AG04449 (cell line): ENCODE measurements at regions of chr10 and their contacts with region 1.

Region 1: GRCh38 chr10:71569775-71570588 is 149.6 kb downstream of the C10orf105 start:
- DNase-seq: no peak
- H3K4me3 ChIP-seq: no peak overlapping the region
- CTCF ChIP-seq: peak; percentile 84

Region 2: GRCh38 chr10:71302874-71303568 is 267.0 kb before region 1 on chr10:
- CTCF ChIA-PET with region 1: interaction called, 14 read pairs
- POLR2A ChIA-PET with region 1: no interaction called
- DNase-seq: peak; percentile 17
- H3K4me3 ChIP-seq: no peak overlapping the region
- CTCF ChIP-seq: peak; percentile 30

Region 3: GRCh38 chr10:71378336-71379117 is 191.5 kb before region 1 on chr10:
- CTCF ChIA-PET with region 1: interaction called, 16 read pairs
- POLR2A ChIA-PET with region 1: no interaction called
- DNase-seq: no peak
- H3K4me3 ChIP-seq: no peak overlapping the region
- CTCF ChIP-seq: no peak

Region 4: DNA sequence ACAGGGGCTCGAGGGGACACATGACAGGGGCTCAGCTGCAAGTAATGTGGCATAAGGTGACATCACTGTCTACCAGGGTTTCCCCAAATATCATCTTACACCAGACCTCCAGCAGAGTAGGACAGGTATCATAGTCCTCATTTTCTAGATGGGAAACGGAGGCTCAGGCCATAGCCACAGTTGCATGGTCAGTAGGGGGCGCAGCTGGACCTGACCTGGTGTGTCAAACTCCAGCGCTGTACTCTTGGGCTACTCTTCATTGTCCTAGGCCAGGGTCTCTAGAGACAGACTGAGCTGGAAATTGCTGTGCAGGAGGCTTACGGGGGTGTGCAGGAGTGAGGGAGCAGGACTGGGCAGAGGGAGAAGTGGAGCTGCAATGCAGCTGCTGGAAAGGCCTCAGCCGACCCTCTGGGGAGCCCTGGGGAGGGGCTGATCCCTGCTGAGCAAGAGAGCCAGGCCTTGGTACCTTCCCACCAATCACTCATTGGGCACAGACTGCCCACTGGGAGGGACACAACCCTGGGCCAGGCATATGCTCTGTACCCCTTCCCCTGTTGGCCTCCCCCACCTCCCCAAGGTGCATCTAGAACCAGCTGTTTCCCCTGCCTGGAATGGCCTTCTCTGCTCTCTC is 83.4 kb before region 1 on chr10:
- CTCF ChIA-PET with region 1: no interaction called
- POLR2A ChIA-PET with region 1: no interaction called
- DNase-seq: no peak
- H3K4me3 ChIP-seq: no peak overlapping the region
- CTCF ChIP-seq: peak; percentile 22

Region 5: GRCh38 chr10:71547876-71548846 is 21.8 kb before region 1 on chr10:
- CTCF ChIA-PET with region 1: interaction called, 55 read pairs
- POLR2A ChIA-PET with region 1: no interaction called
- DNase-seq: no peak
- H3K4me3 ChIP-seq: no peak overlapping the region
- CTCF ChIP-seq: peak; percentile 22

Region 6: DNA sequence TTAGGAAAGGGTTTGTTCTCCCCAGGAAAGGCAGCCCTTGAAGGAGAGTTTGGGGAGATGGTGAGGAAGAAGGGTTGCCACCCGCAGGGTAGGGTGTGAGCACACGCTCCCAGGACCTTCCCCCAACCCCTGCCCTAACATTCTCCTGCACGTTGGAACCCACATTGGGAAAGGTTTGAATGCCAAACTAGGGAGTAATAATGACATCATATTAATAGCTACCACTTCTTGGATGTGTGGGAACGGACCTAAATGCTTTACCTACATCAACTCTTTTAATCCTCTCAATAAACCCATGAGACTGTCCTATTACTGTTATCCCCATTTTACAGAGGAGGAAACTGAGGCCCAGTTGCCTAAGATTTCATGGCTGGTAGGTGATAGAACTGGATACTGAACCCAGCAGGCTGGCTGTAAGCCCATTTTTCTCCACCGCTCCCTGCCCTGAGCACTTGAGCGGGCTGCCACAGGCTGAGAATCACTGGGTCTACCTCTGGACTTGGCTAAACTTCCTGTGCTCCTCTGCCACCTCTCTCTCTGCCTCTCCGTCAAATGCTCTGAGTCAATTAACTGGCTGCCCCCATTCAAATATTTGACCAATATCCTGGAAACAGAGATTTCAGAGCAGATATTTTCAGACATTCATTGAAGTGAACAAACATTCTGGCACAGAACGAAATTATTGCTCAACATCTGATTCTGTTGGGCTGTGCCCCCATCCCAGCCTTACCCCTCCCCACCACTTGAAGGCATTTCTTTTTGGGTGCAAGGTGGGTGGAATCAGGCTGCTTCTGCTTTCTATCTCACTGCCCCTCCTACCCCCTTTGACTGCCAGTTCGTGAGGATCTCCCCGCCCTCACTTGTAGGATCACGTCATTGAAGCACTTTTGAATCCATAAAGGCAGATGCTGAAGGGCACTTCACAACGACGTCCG is 19.9 kb after region 1 on chr10:
- CTCF ChIA-PET with region 1: interaction called, 37 read pairs
- POLR2A ChIA-PET with region 1: no interaction called
- DNase-seq: no peak
- H3K4me3 ChIP-seq: no peak overlapping the region
- CTCF ChIP-seq: no peak

Region 7: DNA sequence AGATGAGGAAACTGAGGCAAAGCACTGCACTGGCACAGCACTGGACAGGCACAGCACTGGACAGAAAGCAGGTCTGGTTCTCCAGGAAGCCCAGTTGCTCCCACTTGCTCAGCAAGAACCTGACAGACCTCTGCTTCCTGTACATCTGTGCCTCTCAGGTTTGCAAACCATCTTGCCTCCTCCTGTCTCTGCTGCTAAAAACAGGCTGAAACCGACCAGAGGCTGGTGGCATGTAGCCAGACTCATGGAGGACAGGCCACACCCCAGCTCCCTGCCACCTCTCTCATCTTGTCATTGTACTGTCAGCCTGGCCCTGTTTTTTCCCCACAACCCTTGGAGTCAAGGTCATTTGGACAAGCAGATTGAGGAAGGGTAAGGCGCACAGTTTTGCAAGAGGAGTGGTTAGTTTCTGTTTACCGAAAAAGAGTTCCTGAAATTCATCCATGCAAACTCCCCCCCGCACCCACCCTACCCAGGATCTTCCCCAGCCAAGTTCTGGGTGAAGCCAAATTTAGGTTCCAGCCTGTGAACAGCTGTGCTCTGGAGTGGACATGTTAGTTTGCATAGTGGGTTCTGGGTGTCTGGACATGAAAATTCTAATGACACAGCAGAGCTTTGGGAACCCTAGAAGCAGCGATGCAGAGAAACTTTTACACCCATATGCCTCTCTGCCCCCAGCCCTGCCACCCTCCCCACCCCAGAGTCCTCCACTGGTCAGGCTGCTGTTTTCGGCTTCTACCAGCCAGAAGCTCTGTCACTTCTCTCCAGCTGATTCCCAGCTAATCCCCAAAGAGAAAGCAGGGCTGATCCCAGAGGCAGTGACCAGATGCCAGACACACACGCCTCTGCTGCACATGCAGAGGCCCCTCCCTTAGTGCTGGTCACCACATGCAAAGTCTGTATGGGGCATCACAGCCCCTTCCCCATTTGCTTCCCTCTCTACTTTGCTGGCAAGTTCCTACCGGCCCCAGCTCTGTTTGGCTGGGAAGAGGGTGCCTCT is 158.1 kb after region 1 on chr10:
- CTCF ChIA-PET with region 1: no interaction called
- POLR2A ChIA-PET with region 1: no interaction called
- DNase-seq: no peak
- H3K4me3 ChIP-seq: no peak overlapping the region
- CTCF ChIP-seq: no peak